ENCODE measurements at regions of chr5 and their contacts with region 1.

Region 1: DNA sequence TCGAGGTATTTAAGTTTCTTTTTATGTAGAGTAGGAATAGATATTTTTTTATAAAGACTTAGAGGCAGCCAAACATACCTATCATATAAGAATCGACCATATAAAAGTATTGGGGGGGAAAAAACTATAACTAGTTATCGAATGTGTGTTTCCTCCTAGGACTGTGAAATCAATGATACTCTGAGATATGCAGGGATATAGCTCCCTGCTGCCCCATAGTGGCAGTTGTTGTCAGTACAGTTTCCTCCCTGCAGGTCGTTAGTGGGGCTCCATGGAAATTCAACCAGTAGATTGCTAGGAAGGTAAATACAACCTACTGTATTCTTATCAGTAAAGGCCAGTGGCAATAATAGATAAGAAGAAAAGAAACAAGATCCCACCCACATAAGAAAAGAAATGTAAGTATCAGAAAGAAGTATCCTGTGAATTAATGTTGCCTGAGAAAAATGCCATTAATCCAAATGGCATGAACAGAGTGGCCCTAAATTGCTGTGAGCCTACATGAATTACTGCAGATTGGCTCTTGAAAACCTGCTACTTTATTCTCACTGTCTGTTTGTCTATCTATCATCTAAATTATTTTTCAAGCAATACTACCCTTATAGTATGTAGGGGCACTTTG is 136.9 kb upstream of the FBN2 start:
- DNase-seq: peak; percentile 77
- H3K4me3 Mint-ChIP-seq: no peak overlapping the region
- H3K27ac Mint-ChIP-seq: no peak overlapping the region
- H3K4me1 Mint-ChIP-seq: no peaks in the 10 kb centered on the region
- H3K27me3 Mint-ChIP-seq: no peaks in the 10 kb centered on the region

Region 2: DNA sequence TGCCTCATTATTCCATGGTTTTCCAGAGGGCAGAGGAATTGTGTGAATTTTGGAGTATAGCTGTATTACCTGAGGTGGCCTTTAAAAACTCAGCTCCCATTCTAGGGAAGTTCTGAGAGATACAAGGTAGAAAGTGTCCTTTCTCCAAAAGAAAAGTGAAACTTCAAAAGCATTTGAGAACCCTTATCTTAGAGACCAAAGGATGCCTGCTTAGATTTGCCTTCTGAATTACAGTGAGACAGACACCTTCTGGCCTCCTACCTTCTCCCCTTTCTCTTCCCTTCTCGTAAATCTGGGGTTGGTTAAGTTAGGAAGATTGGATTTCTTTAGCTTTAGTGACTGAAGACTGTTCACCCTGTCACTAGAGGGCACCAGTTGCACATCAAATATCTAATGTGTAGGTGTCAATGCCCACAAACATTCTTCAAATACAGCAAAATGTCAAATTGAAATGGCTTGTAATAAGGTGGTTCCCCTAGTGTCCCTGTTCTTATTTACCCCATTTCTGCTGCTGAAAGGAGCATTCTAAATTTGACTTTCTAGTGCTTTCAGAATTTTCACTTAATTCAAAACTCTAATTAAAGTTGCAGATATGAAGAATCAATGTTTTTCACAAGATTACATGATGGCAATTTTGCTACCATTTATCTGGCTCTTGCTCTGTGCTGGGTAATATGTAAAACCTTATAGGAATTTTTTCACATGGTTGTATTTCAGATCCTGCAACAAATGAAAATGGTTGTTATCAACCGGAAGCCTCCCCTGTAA is 1110.8 kb before region 1 on chr5:
- intact Hi-C with region 1: loop called (anchors 5 kb)
- DNase-seq: peak; percentile 83
- H3K4me3 Mint-ChIP-seq: no peak overlapping the region
- H3K27ac Mint-ChIP-seq: no peak overlapping the region
- H3K4me1 Mint-ChIP-seq: peaks cover 8% of the 10 kb centered on the region
- H3K27me3 Mint-ChIP-seq: peaks cover 25% of the 10 kb centered on the region

Region 3: GRCh38 chr5:127746756-127747155 is 928.2 kb before region 1 on chr5:
- intact Hi-C with region 1: loop called (anchors 5 kb)
- DNase-seq: no peak
- H3K4me3 Mint-ChIP-seq: no peak overlapping the region
- H3K27ac Mint-ChIP-seq: no peak overlapping the region
- H3K4me1 Mint-ChIP-seq: no peaks in the 10 kb centered on the region
- H3K27me3 Mint-ChIP-seq: peaks cover 7% of the 10 kb centered on the region